CD8-positive, alpha-beta T cell (primary cell): ENCODE measurements at regions of chr1 and their contacts with region 1.

Region 1: DNA sequence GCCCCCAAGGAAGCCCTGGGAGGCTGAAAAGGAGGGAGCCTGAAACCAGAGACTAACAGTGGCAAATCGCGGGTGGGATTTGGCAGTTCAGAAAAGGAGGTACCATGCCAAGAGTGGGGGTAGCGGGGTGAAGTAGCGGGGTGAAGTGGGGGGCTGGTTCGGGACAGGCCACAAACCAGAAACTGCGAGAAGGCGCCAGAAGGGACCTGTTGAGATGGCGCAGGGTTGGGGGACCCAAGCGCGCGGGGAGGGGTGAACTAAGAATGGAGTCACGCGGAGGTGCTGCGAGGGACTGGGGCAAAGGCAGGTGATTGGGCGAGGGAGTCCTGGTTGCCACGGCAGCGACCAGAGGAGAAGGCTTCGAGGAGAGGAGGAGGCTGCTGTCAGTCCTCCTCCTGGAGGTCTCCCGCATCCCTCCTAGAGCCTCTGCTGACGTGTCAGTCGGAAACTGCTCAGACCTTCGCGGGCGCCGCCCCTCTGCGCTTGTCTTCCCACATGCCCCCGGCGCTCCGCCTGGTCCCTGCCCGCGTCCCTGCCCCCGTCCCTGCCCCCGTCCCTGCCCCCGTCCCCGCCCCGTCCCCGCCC is 438 bp upstream of the MIA3 start:
- DNase-seq: peak; percentile 88 to 99 (median 93)
- ATAC-seq: peak; percentile 91
- H3K4me3 ChIP-seq: peak overlapping the region; percentile 67 to 68
- H3K4me3 Mint-ChIP-seq: peak overlapping the region; percentile 93
- H3K27ac ChIP-seq: peak overlapping the region; percentile 83
- H3K27ac Mint-ChIP-seq: peak overlapping the region; percentile 98
- H3K4me1 ChIP-seq: peaks cover 20% of the 10 kb centered on the region
- H3K4me1 Mint-ChIP-seq: peaks cover 31% of the 10 kb centered on the region
- H3K27me3 ChIP-seq: peaks cover 0 to 3% of the 10 kb centered on the region in 2 experiments
- H3K27me3 Mint-ChIP-seq: peaks cover 16% of the 10 kb centered on the region
- CTCF ChIP-seq: no peak

Region 2: GRCh38 chr1:222589462-222590302 is 27.8 kb before region 1 on chr1 and contains the start of gene TAF1A:
- CTCF ChIA-PET with region 1: interaction called, 4 read pairs
- POLR2A ChIA-PET with region 1: interaction called, 7 read pairs
- intact Hi-C with region 1: loop called (anchors 1 kb)
- DNase-seq: peak; percentile 69 to 93 (median 86)
- ATAC-seq: peak; percentile 98
- H3K4me3 ChIP-seq: peak within 1 kb of the TSS; percentile 68 to 77
- H3K4me3 Mint-ChIP-seq: peak within 1 kb of the TSS; percentile 98
- H3K27ac ChIP-seq: peak within 1 kb of the TSS; percentile 85 to 87
- H3K27ac Mint-ChIP-seq: peak within 1 kb of the TSS; percentile 99
- H3K4me1 ChIP-seq: peaks cover 11% of the 10 kb centered on the region
- H3K4me1 Mint-ChIP-seq: peaks cover 52% of the 10 kb centered on the region
- H3K27me3 ChIP-seq: no peaks in the 10 kb centered on the region
- H3K27me3 Mint-ChIP-seq: no peaks in the 10 kb centered on the region
- CTCF ChIP-seq: no peak
- total RNA-seq, gene TAF1A: 5.3 to 5.6 TPM

Region 3: GRCh38 chr1:222814536-222815439 is 197.3 kb after region 1 on chr1 and contains the start of gene DISP1:
- CTCF ChIA-PET with region 1: no interaction called
- POLR2A ChIA-PET with region 1: no interaction called
- intact Hi-C with region 1: loop called (anchors 10 kb)
- DNase-seq: peak; percentile 35 to 86 (median 66)
- ATAC-seq: peak; percentile 79
- H3K4me3 ChIP-seq: peak within 1 kb of the TSS; percentile 91 to 98
- H3K4me3 Mint-ChIP-seq: peak within 1 kb of the TSS; percentile 92
- H3K27ac ChIP-seq: peak within 1 kb of the TSS; percentile 75 to 83
- H3K27ac Mint-ChIP-seq: peak within 1 kb of the TSS; percentile 92
- H3K4me1 ChIP-seq: peaks cover 13% of the 10 kb centered on the region
- H3K4me1 Mint-ChIP-seq: peaks cover 25% of the 10 kb centered on the region
- H3K27me3 ChIP-seq: no peaks in the 10 kb centered on the region
- H3K27me3 Mint-ChIP-seq: no peaks in the 10 kb centered on the region
- CTCF ChIP-seq: no peak
- total RNA-seq, gene DISP1: 0.73 to 1.0 TPM

Region 4: GRCh38 chr1:223233410-223234169 is 616.1 kb after region 1 on chr1:
- CTCF ChIA-PET with region 1: no interaction called
- POLR2A ChIA-PET with region 1: no interaction called
- intact Hi-C with region 1: no loop called
- DNase-seq: peak in 2 of 9 experiments; percentile 39 to 41
- ATAC-seq: no peak
- H3K4me3 ChIP-seq: no peak overlapping the region
- H3K4me3 Mint-ChIP-seq: no peak overlapping the region
- H3K27ac ChIP-seq: no peak overlapping the region
- H3K27ac Mint-ChIP-seq: no peak overlapping the region
- H3K4me1 ChIP-seq: peaks cover 62% of the 10 kb centered on the region
- H3K4me1 Mint-ChIP-seq: peaks cover 61% of the 10 kb centered on the region
- H3K27me3 ChIP-seq: no peaks in the 10 kb centered on the region
- H3K27me3 Mint-ChIP-seq: no peaks in the 10 kb centered on the region
- CTCF ChIP-seq: no peak